Activated CD4-positive, alpha-beta T cell treated with anti-CD3 and anti-CD28 coated beads, Interleukin-2, amount 10 ng/mL, durations not matched to agents 7 days and 5 days (primary cell): ENCODE measurements at regions of chr16 and their contacts with region 1.

Region 1: DNA sequence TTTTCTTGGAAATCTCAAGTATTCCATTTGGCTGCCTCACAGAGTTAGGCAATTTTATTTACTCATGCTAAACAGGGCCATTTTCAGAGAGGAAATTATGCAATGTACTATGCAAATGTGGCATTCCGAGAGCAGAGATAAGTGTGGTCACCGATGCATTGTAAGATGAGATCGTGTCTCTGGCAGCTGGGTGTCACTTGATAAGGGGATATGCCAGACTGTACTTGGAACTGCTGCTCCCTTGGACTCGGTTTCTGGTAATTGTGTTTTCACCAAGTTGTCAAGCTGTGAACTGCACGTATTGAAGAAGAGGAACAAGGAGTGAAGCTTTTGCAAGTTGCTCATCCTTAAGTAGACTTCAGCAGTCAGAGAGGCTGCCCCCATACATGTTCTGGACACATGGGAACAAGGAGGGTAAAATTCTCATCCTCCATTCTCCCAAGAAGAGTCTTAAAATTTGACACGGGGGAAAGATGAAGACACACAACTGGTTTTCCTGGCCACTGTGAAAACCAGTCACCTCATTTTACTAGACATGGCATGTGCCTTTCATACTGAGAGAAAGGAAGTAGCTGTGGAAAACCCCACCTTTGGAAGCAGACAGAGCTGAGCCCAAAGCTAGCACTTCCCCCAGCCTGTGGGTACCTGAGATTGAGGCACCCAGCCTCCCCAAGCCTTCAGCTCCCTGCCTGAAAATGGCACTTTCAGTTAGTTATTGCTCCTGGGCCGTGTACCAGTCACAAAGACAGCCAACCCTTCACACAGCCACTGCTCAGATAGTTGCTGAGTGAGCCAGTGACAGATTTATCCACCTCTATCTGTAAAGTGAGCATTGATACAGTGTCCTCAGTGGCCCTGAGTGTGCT is 150.7 kb downstream of the SOCS1 start:
- DNase-seq: peak; percentile 57
- H3K4me3 Mint-ChIP-seq: peak overlapping the region; percentile 24
- H3K27ac Mint-ChIP-seq: peak overlapping the region; percentile 84
- H3K4me1 Mint-ChIP-seq: peaks cover 75% of the 10 kb centered on the region
- H3K27me3 Mint-ChIP-seq: no peaks in the 10 kb centered on the region

Region 2: DNA sequence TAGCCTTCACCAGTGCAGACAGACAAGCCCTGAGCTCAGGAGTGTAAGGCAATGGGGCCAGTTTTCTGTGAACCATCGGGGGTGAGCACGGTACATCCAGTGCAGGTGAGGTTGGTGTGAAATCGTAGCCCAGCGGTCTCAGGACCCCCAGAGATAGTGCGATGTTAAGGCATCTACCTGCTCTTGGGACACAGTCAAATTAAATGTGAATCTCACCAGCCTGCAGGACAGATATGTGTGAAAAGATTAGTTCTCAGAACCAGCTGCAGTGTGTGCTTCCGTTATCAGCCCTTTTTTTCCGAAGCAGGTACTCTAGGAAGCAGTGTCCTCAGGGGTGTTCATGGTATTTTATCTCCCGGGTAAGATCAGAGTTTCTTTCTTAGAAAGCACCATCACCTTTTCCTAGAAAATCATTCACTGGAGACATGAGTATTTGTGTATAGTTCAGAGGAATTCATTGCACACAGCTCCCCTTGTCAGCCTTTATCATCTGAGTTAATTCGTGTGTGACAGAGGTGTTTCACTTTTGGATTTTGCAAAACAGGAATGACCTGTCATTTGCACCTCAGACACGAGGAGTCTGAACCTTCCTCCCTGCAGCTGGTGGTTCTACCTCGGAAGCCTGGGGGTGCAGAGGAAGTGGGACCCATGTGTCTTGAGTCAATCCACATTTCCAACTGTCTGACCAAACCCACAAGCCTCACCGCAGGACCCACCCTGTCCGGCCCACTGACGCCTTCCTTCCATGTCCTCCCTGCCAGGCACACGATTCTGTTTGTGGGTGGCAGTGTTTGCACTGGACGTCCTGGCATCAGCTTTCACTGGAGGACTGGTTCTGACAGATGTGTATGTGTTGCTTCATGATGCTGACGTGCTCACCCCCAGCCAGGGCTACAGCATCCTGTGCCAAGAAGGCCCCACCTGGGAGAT is 53.1 kb before region 1 on chr16:
- CTCF ChIA-PET with region 1: interaction called, 5 read pairs
- POLR2A ChIA-PET with region 1: interaction called, 11 read pairs
- DNase-seq: peak; percentile 79
- H3K4me3 Mint-ChIP-seq: peak overlapping the region; percentile 32
- H3K27ac Mint-ChIP-seq: peak overlapping the region; percentile 90
- H3K4me1 Mint-ChIP-seq: peaks cover 86% of the 10 kb centered on the region
- H3K27me3 Mint-ChIP-seq: no peaks in the 10 kb centered on the region

Region 3: GRCh38 chr16:11079652-11080187 is 25.6 kb before region 1 on chr16:
- CTCF ChIA-PET with region 1: interaction called, 15 read pairs
- POLR2A ChIA-PET with region 1: interaction called, 10 read pairs
- DNase-seq: no peak
- H3K4me3 Mint-ChIP-seq: no peak overlapping the region
- H3K27ac Mint-ChIP-seq: peak overlapping the region; percentile 76
- H3K4me1 Mint-ChIP-seq: peaks cover 93% of the 10 kb centered on the region
- H3K27me3 Mint-ChIP-seq: no peaks in the 10 kb centered on the region

Region 4: GRCh38 chr16:11094072-11094856 is 11.0 kb before region 1 on chr16:
- CTCF ChIA-PET with region 1: interaction called, 17 read pairs
- POLR2A ChIA-PET with region 1: interaction called, 4 read pairs
- DNase-seq: peak; percentile 74
- H3K4me3 Mint-ChIP-seq: peak overlapping the region; percentile 35
- H3K27ac Mint-ChIP-seq: peak overlapping the region; percentile 88
- H3K4me1 Mint-ChIP-seq: peaks cover 88% of the 10 kb centered on the region
- H3K27me3 Mint-ChIP-seq: no peaks in the 10 kb centered on the region

Region 5: GRCh38 chr16:11238272-11239202 is 133.3 kb after region 1 on chr16:
- CTCF ChIA-PET with region 1: no interaction called
- POLR2A ChIA-PET with region 1: interaction called, 10 read pairs
- DNase-seq: no peak
- H3K4me3 Mint-ChIP-seq: no peak overlapping the region
- H3K27ac Mint-ChIP-seq: peak overlapping the region; percentile 31
- H3K4me1 Mint-ChIP-seq: peaks cover 31% of the 10 kb centered on the region
- H3K27me3 Mint-ChIP-seq: no peaks in the 10 kb centered on the region